ENCODE measurements at regions of chr11 and their contacts with region 1.

Region 1: GRCh38 chr11:96342961-96343711 is at the start of gene MAML2:
- DNase-seq: peak; percentile 78 to 97
- H3K4me3 ChIP-seq: peak within 1 kb of the TSS; percentile 59 to 85
- H3K27ac ChIP-seq: peak within 1 kb of the TSS; percentile 86 to 95
- H3K4me1 ChIP-seq: peaks cover 4 to 24% of the 10 kb centered on the region in 2 donors
- H3K27me3 ChIP-seq: no peaks in the 10 kb centered on the region
- CTCF ChIP-seq: peak; percentile 94 to 98 (median 97)
- total RNA-seq, gene MAML2: 13.2 TPM

Region 2: GRCh38 chr11:95849087-95849825 is 493.9 kb before region 1 on chr11:
- intact Hi-C with region 1: loop called (anchors 1 kb)
- DNase-seq: peak in 1 of 2 donors; percentile 69
- H3K4me3 ChIP-seq: no peak overlapping the region
- H3K27ac ChIP-seq: peak overlapping the region in 1 of 2 donors; percentile 33
- H3K4me1 ChIP-seq: peaks cover 0 to 4% of the 10 kb centered on the region in 2 donors
- H3K27me3 ChIP-seq: no peaks in the 10 kb centered on the region
- CTCF ChIP-seq: peak; percentile 39 to 66 (median 55)

Region 3: DNA sequence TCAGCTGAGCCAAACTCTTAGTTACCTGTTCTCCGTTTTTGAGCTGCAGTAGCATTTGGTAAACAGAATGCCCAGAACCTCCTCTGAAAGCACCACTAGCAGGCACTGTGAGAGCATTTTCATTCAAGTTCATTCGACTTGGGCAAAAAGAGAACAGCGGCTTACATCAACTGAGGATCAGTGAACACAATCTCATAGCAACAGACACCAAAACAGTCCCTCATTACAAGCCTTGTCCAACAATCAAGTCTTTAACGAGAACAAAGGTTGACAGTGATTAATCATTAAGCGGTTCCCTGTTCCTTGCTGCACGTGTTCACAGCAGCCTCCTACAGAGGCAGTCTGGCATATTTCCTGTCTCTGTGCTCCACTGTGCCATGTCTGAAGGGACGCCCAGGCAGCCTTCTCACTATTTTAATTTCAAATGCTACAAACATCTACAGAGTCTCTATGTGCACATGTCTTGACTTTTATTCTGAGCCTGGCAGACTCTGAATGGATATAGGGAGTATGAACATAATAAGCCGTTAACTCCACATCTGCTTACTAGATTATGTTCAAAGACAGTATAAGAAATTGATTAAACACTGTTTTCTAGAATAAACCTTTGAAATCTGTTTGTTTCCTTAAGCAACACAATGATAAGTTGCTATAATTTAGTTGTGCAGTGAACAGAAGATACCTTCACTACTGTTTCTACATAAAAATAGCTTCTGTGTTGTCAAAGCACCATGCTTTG is 330.9 kb before region 1 on chr11:
- intact Hi-C with region 1: loop called (anchors 2 kb)
- DNase-seq: peak in 1 of 2 donors; percentile 73
- H3K4me3 ChIP-seq: peak overlapping the region; percentile 22 to 55
- H3K27ac ChIP-seq: peak overlapping the region; percentile 62 to 69
- H3K4me1 ChIP-seq: peaks cover 0 to 7% of the 10 kb centered on the region in 2 donors
- H3K27me3 ChIP-seq: no peaks in the 10 kb centered on the region
- CTCF ChIP-seq: peak; percentile 38 to 70 (median 54)

Region 4: GRCh38 chr11:96054870-96055705 is 288.0 kb before region 1 on chr11:
- intact Hi-C with region 1: loop called (anchors 2 kb)
- DNase-seq: no peak
- H3K4me3 ChIP-seq: no peak overlapping the region
- H3K27ac ChIP-seq: peak overlapping the region; percentile 67 to 75
- H3K4me1 ChIP-seq: peaks cover 4 to 35% of the 10 kb centered on the region in 2 donors
- H3K27me3 ChIP-seq: no peaks in the 10 kb centered on the region
- CTCF ChIP-seq: peak; percentile 43 to 63 (median 46)

Region 5: DNA sequence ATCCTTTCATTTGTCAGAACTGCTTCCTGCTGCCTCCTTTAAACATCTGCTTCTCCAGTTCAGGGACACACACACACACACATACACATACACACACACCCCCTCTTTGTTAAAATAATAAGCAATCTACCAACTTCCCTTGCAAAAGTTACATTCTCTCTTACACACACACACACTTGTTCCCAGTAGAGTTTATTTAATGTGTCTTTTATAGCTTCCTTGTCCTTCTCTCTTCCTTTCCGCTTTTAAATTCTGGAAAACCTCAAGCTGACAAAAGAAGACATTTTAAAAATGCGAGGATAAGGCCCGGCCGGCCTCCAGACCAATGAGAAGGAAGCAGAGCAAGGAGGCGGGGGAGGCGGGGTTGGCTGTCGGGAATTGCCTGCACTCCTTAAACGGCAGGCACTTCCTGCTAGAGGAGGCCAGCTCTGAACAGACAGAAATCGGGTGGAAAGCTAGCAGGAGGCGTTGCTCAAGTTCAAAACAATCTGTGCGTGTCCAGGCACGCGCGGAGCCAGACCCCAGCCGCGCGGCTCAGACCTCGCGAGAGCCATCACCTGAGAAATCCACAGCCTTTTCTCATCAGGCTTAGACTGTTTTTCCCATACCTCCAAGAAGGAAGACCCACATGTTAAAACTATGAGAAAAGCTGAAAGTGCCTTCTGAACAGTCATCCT is 100.0 kb before region 1 on chr11:
- intact Hi-C with region 1: loop called (anchors 2 kb)
- DNase-seq: peak; percentile 88 to 97
- H3K4me3 ChIP-seq: peak overlapping the region; percentile 59 to 61
- H3K27ac ChIP-seq: peak overlapping the region; percentile 87 to 90
- H3K4me1 ChIP-seq: peaks cover 0 to 23% of the 10 kb centered on the region in 2 donors
- H3K27me3 ChIP-seq: no peaks in the 10 kb centered on the region
- CTCF ChIP-seq: no peak

Region 6: GRCh38 chr11:96306933-96307775 is 36.0 kb before region 1 on chr11:
- intact Hi-C with region 1: loop called (anchors 1 kb)
- DNase-seq: peak; percentile 58 to 98
- H3K4me3 ChIP-seq: peak overlapping the region; percentile 41 to 60
- H3K27ac ChIP-seq: peak overlapping the region; percentile 66 to 81
- H3K4me1 ChIP-seq: peaks cover 16 to 56% of the 10 kb centered on the region in 2 donors
- H3K27me3 ChIP-seq: no peaks in the 10 kb centered on the region
- CTCF ChIP-seq: no peak

Region 7: DNA sequence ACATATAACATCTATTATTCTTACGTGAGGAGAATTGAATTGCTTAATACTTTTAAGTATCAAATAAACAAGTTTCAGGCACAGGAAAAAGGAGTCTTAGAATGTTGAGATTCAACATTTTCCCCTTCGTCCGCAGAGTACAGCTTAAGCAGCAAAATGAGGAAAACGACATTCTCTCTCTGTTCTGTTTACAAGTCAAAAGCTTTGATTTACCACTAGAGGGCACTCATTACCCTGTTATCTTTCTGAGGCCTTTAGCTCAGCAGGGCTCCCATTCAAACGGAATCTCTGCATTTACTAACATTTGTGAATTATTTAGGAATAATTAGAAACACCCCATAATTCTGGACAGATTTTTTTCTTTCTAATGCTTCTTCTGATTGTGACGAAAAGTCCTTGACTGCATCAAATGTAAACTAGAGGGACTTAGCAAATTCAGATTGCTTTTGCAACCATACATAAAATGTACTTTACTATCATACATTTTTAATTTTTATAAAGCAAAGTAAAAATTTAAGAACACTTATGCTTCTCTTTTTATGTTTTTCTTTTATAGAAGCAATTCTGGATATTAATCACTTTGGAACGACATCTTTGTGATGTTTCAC is 121.7 kb after region 1 on chr11:
- intact Hi-C with region 1: no loop called
- DNase-seq: no peak
- H3K4me3 ChIP-seq: no peak overlapping the region
- H3K27ac ChIP-seq: no peak overlapping the region
- H3K4me1 ChIP-seq: peaks cover 0 to 5% of the 10 kb centered on the region in 2 donors
- H3K27me3 ChIP-seq: no peaks in the 10 kb centered on the region
- CTCF ChIP-seq: peak; percentile 17 to 74 (median 70)

Region 8: DNA sequence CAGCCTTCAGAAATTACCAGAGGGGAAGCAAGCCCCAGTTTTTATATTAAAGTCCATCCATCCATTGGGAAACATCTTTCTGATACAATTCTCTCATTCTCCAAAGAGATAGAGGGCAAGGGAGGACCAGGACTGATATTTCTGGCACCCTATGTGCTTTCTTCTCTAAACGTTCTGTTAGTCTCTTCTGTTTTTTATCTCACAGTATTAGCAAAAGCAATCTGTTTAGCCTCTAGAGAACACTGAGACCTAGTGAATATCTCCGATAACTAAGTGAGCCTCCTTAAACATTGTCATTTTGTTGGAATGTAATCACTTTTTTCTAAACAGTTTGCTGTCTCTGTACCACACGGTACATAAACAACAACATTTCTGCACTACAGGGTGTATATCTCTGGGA is 511.3 kb after region 1 on chr11:
- intact Hi-C with region 1: no loop called
- DNase-seq: no peak
- H3K4me3 ChIP-seq: no peak overlapping the region
- H3K27ac ChIP-seq: no peak overlapping the region
- H3K4me1 ChIP-seq: no peaks in the 10 kb centered on the region
- H3K27me3 ChIP-seq: no peaks in the 10 kb centered on the region
- CTCF ChIP-seq: no peak

Measured in ascending aorta (tissue), 2 donors.